ENCODE measurements at regions of chr18 and their contacts with region 1.

Region 1: GRCh38 chr18:23949863-23950262 is 64.7 kb upstream of the TTC39C start:
- DNase-seq: peak in 1 of 2 experiments; percentile 44
- H3K4me3 ChIP-seq: no peak overlapping the region
- H3K27ac ChIP-seq: no peak overlapping the region
- H3K4me1 ChIP-seq: peaks cover 0 to 12% (median 6%) of the 10 kb centered on the region in 4 experiments; a peak in 6 of 7 replicates
- H3K27me3 ChIP-seq: no peaks in the 10 kb centered on the region
- CTCF ChIP-seq: no peak
- EP300 ChIP-seq: peak in 1 of 2 experiments; percentile 3; a peak in 1 of 3 replicates
- POLR2A ChIP-seq: no peak
- RAD21 ChIP-seq: no peak

Region 2: GRCh38 chr18:23887493-23887892 is 62.4 kb before region 1 on chr18:
- CTCF ChIA-PET with region 1: no interaction called
- POLR2A ChIA-PET with region 1: no interaction called
- DNase-seq: no peak
- H3K4me3 ChIP-seq: no peak overlapping the region
- H3K27ac ChIP-seq: no peak overlapping the region
- H3K4me1 ChIP-seq: peaks cover 0 to 7% (median 4%) of the 10 kb centered on the region in 4 experiments; a peak in 6 of 7 replicates
- H3K27me3 ChIP-seq: no peaks in the 10 kb centered on the region
- CTCF ChIP-seq: no peak
- EP300 ChIP-seq: no peak
- POLR2A ChIP-seq: no peak
- RAD21 ChIP-seq: no peak

Region 3: GRCh38 chr18:23938043-23938756 is 11.7 kb before region 1 on chr18:
- CTCF ChIA-PET with region 1: interaction called, 6 read pairs
- POLR2A ChIA-PET with region 1: interaction called, 18 read pairs
- DNase-seq: no peak
- H3K4me3 ChIP-seq: no peak overlapping the region
- H3K27ac ChIP-seq: no peak overlapping the region
- H3K4me1 ChIP-seq: no peaks in the 10 kb centered on the region
- H3K27me3 ChIP-seq: no peaks in the 10 kb centered on the region
- CTCF ChIP-seq: no peak
- EP300 ChIP-seq: no peak
- POLR2A ChIP-seq: no peak
- RAD21 ChIP-seq: no peak

Region 4: DNA sequence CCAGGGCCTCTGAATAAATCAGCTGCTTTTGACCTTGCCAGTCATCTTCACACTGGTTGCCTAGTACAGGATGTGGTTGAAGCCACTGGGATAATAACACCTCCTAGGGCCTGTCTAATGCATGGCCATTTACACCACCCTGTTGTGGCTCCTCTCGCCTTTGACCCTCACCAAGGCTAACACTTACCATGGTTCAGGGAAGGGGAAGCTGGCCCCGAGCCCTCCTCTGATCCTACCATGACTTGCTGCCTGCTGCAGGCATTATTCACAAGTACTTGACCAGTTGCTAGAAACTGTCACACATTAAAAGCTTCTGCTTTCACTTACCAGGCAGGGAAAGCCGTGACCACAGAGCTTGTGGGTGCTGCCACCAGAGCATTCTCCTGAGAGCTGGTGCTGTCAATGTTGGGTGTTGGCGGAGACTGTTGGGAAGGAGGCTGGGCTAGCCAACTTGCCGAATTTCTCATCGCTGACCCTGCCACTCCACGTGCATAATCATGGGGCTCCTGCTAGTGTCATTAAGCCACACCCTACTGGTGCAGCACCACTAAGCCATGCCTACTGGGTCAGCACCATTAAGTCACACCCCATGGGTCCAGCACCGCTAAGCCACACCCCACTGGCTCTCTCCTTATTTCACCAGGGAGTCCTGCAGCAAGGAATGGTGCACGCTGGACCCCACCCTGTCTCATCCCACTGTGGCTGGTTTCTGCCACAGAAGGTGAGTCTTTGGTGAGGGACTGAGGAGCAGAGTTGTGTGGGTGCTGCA is 17.6 kb after region 1 on chr18:
- CTCF ChIA-PET with region 1: interaction called, 11 read pairs
- POLR2A ChIA-PET with region 1: no interaction called
- DNase-seq: no peak
- H3K4me3 ChIP-seq: no peak overlapping the region
- H3K27ac ChIP-seq: no peak overlapping the region
- H3K4me1 ChIP-seq: 0 out of 7 replicates have a peak, but pooled peaks cover 0 to 2% (median 0%) of the 10 kb centered on the region in 4 experiments
- H3K27me3 ChIP-seq: no peaks in the 10 kb centered on the region
- CTCF ChIP-seq: no peak
- EP300 ChIP-seq: no peak
- POLR2A ChIP-seq: no peak
- RAD21 ChIP-seq: no peak

Region 5: GRCh38 chr18:24014062-24014985 is 64.5 kb after region 1 on chr18 and contains the start of gene TTC39C:
- CTCF ChIA-PET with region 1: interaction called, 3 read pairs
- POLR2A ChIA-PET with region 1: interaction called, 12 read pairs
- DNase-seq: peak in 1 of 2 experiments; percentile 79
- H3K4me3 ChIP-seq: peak within 1 kb of the TSS; percentile 67 to 94 (median 78)
- H3K27ac ChIP-seq: no peak within 1 kb of the TSS; the same call in 1 of the 2 replicates
- H3K4me1 ChIP-seq: peaks cover 8 to 25% (median 15%) of the 10 kb centered on the region in 4 experiments; a peak in 6 of 7 replicates
- H3K27me3 ChIP-seq: peaks cover 0 to 8% (median 2%) of the 10 kb centered on the region in 4 experiments; a peak in 1 of 7 replicates
- CTCF ChIP-seq: no peak
- EP300 ChIP-seq: no peak
- POLR2A ChIP-seq: peak in 1 of 2 experiments; percentile 11; a peak in 1 of 3 replicates
- RAD21 ChIP-seq: no peak
- total RNA-seq, gene TTC39C: 78.6 and 79.1 TPM in 2 replicates